OCI-LY7 (cell line): ENCODE measurements at regions of chr21 and their contacts with region 1.

Region 1: DNA sequence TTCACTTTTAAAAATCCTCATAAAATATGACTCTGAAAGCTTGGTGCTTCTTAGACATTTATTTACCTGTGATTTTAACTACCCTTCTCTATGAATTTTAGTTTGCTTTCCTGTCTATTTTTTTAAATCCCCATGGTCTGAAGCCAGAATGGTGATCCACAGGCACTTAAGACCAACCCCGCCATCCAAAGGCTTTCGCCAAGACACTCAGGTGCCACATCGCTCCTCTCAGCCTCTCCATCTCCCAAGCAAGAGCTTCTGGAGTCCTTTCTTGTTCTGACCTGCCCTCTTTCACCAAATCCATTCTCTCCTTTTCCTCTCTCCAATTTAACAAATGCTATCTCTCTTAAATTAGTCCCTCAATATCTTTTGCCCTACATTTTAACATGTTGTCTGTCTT is 464.6 kb downstream of the PCP4 start:
- DNase-seq: no peak
- H3K4me3 ChIP-seq: no peak overlapping the region
- H3K27ac ChIP-seq: no peak overlapping the region
- H3K4me1 ChIP-seq: no peaks in the 10 kb centered on the region
- CTCF ChIP-seq: no peak

Region 2: DNA sequence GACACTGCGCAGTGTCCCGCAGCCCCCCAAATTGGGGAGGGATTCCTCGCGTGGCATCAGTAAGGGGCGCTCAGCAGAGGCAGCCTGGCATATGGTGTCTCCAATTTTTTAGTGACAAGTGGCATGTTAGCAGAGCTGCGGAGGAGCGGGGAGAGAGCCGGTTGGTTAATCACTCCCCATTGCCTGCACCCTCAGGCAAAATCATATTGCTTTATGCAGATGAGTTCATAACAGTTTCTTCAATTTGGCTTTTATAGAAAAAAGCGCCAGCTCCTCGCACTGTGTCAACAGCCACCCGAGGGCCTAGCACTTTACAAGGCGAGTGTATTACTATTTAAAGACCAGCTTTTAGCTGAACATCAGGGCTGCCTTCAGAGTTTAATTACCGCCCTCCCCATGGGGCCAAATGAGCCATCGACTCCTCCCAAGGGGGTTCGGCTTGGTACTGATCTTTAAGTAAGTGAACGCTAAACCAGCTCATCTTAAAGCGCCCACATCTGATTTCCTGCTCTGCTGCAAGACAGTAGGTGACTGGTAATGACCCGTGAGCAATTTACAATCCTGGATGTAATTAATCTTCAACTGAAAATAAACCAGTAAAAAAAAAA is 216.2 kb after region 1 on chr21:
- CTCF ChIA-PET with region 1: no interaction called
- POLR2A ChIA-PET with region 1: interaction called, 11 read pairs
- intact Hi-C with region 1: no loop called
- DNase-seq: no peak
- H3K4me3 ChIP-seq: no peak overlapping the region
- H3K27ac ChIP-seq: no peak overlapping the region
- H3K4me1 ChIP-seq: no peaks in the 10 kb centered on the region
- CTCF ChIP-seq: no peak